Heart left ventricle (tissue), 16 donors: ENCODE measurements at regions of chr10 and their contacts with region 1.

Region 1: DNA sequence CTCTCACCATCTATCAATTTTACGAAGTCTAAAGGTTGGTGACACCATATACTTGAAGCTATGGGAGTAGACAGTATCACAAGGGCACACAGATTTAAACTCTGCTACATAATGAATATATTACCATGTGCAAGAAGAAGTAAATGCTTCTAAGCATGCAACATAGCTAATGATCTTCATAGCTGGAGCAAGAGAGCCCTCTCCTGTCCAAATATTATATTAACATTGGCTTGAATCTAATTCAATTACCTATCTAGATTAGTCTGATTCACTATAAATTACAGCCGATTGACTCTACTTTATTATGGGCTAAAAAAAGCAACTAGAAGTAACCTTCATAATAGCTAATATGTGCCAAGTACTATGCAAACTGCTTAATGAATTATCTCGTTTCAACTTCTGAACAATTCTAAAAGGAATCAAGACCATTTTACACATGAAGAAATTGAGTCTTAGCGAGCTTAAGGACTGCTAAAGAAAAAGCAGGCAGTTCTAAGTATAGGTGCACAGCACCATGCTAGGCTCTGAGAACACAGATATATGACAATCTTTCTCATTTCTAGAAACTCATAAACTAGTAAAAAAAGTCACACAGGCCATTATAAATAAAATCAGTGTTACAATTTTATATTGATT is 21.9 kb downstream of the FRA10AC1 start:
- DNase-seq: no peak
- ATAC-seq: peak in 1 of 4 donors; percentile 68
- H3K4me3 ChIP-seq: no peak overlapping the region
- H3K27ac ChIP-seq: no peak overlapping the region
- H3K4me1 ChIP-seq: no peaks in the 10 kb centered on the region
- H3K27me3 ChIP-seq: no peaks in the 10 kb centered on the region
- CTCF ChIP-seq: peak in 10 of 12 donors; percentile 26 to 52 (median 42)
- POLR2A ChIP-seq: no peak

Region 2: GRCh38 chr10:93376372-93377293 is 303.9 kb before region 1 on chr10:
- intact Hi-C with region 1: loop called in 1 of 10 experiments (anchors 10 kb)
- DNase-seq: peak in 4 of 5 donors; percentile 37 to 64 (median 45)
- ATAC-seq: peak; percentile 78 to 93 (median 88)
- H3K4me3 ChIP-seq: peak overlapping the region in 3 of 12 donors; percentile 3 to 24 (median 10)
- H3K27ac ChIP-seq: peak overlapping the region in 10 of 12 donors; percentile 43 to 83 (median 72)
- H3K4me1 ChIP-seq: peaks cover 0 to 36% (median 11%) of the 10 kb centered on the region in 12 donors
- H3K27me3 ChIP-seq: no peaks in the 10 kb centered on the region
- CTCF ChIP-seq: peak; percentile 86 to 97 (median 94)
- POLR2A ChIP-seq: no peak

Region 3: GRCh38 chr10:93541402-93542357 is 138.8 kb before region 1 on chr10:
- intact Hi-C with region 1: loop called in 2 of 10 experiments (anchors 5 kb)
- DNase-seq: peak in 4 of 5 donors; percentile 37 to 70 (median 42)
- ATAC-seq: peak; percentile 81 to 90 (median 86)
- H3K4me3 ChIP-seq: peak overlapping the region in 10 of 12 donors; percentile 0 to 47 (median 32)
- H3K27ac ChIP-seq: peak overlapping the region in 4 of 12 donors; percentile 7 to 51 (median 40)
- H3K4me1 ChIP-seq: peaks cover 0 to 15% (median 8%) of the 10 kb centered on the region in 12 donors
- H3K27me3 ChIP-seq: no peaks in the 10 kb centered on the region
- CTCF ChIP-seq: peak; percentile 71 to 91 (median 83)
- POLR2A ChIP-seq: no peak

Region 4: GRCh38 chr10:93554760-93555432 is 125.6 kb before region 1 on chr10:
- intact Hi-C with region 1: loop called in 8 of 10 experiments (anchors 2 to 10 kb)
- DNase-seq: peak; percentile 58 to 81 (median 61)
- ATAC-seq: peak in 3 of 4 donors; percentile 84 to 89 (median 89)
- H3K4me3 ChIP-seq: no peak overlapping the region
- H3K27ac ChIP-seq: peak overlapping the region in 1 of 12 donors; percentile 62
- H3K4me1 ChIP-seq: peaks cover 0 to 21% (median 0%) of the 10 kb centered on the region in 12 donors
- H3K27me3 ChIP-seq: no peaks in the 10 kb centered on the region
- CTCF ChIP-seq: peak; percentile 47 to 73 (median 60)
- POLR2A ChIP-seq: no peak

Region 5: DNA sequence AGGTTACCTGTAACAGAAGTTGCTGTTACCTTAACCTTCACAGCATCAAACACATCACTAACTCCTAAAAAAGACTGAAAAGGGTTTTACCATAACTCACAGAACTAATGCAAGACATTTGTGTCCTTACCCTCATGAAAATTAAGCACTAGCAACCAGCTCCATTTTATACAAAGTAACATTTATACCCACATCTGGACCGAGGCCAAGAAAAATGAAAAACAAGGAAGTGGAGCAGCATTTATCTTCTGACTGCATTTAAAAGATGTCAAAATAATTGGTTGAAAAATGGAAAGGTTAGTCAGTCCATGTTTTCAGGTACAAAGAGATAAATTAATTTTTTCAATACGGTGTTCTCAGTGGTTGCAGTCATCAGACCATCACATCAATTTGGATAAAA is 76.4 kb before region 1 on chr10:
- intact Hi-C with region 1: no loop called
- DNase-seq: no peak
- ATAC-seq: no peak
- H3K4me3 ChIP-seq: no peak overlapping the region
- H3K27ac ChIP-seq: no peak overlapping the region
- H3K4me1 ChIP-seq: peaks cover 0 to 16% (median 8%) of the 10 kb centered on the region in 12 donors
- H3K27me3 ChIP-seq: peaks cover 7 to 63% (median 37%) of the 10 kb centered on the region in 9 donors
- CTCF ChIP-seq: no peak
- POLR2A ChIP-seq: no peak

Region 6: DNA sequence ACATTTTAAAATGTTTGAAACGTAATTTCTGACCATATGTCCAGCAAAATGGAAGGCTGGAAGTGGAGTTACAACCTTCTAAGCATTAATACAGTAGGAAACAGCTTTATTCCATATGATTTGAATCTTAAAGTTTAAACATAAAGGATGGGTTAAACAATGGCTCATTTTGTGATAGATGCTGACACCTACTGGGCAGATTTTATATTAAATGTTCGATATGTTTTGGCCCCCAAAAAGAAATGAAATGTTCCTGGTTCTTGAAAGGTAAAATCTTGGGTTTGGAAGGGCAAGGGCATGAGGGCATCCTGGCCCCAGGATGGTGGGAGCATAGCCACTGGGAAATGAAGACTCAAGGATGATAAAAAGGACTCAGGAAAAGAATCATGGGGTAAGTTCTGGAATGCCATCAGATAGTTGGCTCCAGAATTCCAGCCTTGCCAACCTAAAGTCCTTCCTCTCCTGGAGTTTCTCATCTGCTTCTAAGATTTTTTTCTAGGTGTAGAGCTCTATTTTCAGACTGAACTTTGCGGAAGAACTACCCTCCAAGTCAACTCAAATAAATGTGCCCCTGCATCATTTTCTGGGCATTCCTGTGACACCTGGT is 178.6 kb after region 1 on chr10:
- intact Hi-C with region 1: loop called in 1 of 10 experiments (anchors 5 kb)
- DNase-seq: no peak
- ATAC-seq: no peak
- H3K4me3 ChIP-seq: no peak overlapping the region
- H3K27ac ChIP-seq: no peak overlapping the region
- H3K4me1 ChIP-seq: no peaks in the 10 kb centered on the region
- H3K27me3 ChIP-seq: peaks cover 0 to 3% (median 0%) of the 10 kb centered on the region in 9 donors
- CTCF ChIP-seq: peak in 8 of 12 donors; percentile 13 to 40 (median 24)
- POLR2A ChIP-seq: no peak